HCT116 (cell line): ENCODE measurements at regions of chr9 and their contacts with region 1.

Region 1: DNA sequence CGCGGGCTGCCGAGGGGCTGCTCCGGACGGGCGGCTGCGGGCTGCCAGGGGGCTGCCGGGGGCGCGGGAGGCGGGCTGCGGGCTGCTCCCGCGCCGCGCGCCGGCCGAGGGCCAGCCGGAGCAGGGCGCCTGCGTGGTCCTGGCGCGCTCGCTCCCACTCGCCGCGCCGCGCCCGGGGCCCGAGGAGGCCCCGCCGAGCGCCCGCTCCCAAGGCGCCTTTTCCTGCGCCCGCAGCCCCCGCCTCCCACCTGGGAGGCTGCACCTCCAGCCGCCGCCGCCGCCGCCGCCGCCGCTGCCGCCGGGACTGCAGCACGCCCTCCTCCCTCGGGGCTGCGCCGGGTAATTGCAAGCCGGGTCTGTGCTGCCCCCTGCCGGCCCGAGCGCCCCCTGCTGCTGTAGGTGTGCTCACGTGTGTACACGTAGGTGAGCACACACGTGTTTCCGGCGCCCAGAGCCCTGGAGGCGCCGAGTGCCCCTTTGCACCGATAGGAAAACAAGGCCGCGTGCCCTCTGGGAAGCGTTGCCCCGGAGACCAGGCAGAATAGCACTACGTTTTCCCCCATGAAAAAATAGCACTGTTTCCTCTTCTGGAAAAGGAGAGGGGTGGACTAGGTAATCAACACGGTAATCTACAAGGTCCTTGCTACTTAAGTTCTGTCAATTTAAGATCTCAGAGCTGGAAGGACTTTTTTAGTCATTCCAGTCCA is at the start of gene EPB41L4B:
- DNase-seq: peak; percentile 73
- ATAC-seq: peak; percentile 79
- H3K4me3 ChIP-seq: peak within 1 kb of the TSS; percentile 62 to 71
- H3K27ac ChIP-seq: peak within 1 kb of the TSS; percentile 43; the same call in 1 of the 2 replicates
- H3K4me1 ChIP-seq: peaks cover 20 to 45% of the 10 kb centered on the region in 2 experiments
- H3K27me3 ChIP-seq: no peaks in the 10 kb centered on the region
- CTCF ChIP-seq: peak in 2 of 3 experiments; percentile 87 to 91; a peak in 4 of 6 replicates
- POLR2A ChIP-seq: no peak
- RAD21 ChIP-seq: no peak
- total RNA-seq, gene EPB41L4B: 8.1 TPM

Region 2: GRCh38 chr9:109101810-109102209 is 219.1 kb before region 1 on chr9:
- CTCF ChIA-PET with region 1: no interaction called
- POLR2A ChIA-PET with region 1: no interaction called
- RAD21 ChIA-PET with region 1: no interaction called
- intact Hi-C with region 1: loop called (anchors 5 kb)
- DNase-seq: peak; percentile 27
- ATAC-seq: no peak
- H3K4me3 ChIP-seq: no peak overlapping the region
- H3K27ac ChIP-seq: no peak overlapping the region
- H3K4me1 ChIP-seq: peaks cover 46 to 49% of the 10 kb centered on the region in 2 experiments
- H3K27me3 ChIP-seq: no peaks in the 10 kb centered on the region
- CTCF ChIP-seq: no peak
- POLR2A ChIP-seq: no peak
- RAD21 ChIP-seq: no peak

Region 3: DNA sequence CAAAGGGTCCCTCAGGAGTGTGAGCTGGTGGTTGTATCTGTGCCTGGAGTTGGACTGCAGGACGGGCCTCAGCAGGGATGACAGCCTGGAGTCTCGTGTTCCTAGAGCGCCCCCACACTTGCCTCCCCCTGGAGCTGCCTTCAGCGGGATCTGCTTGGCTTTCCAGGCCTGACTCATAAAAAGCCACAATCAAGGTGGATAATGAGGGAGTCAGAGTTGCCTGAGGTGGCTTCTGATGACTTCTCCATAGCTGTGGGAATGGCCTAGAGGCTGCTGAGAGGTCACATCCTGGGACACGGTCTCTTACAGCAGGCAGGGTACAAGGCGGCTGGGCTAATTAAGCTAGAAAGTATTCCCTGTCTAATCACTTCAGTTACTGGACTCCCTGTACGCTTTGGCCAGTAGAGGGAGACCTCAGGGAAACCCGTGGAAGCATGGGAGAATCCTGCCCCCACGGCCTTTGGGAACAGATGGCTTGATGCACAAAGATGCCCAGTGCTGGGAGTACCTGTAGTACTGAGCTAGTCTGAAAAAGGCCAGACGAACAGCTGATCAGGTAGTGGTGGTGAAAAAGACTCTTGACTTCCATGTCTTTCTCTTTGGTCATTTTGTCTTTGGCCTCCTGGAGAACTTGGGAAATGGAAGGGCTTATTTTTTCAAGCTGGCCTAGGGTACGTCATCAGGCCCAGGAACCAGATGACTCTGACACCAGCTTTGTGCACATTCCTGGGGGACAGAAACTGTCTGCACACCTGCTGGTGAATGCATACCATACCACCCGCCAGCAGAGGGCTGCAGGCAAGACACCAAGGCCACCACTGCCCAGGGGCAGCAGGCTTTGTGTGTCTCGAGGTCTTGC is 137.7 kb before region 1 on chr9:
- CTCF ChIA-PET with region 1: interaction called, 10 read pairs
- POLR2A ChIA-PET with region 1: no interaction called
- RAD21 ChIA-PET with region 1: interaction called in 1 of 2 experiments, 5 read pairs
- intact Hi-C with region 1: loop called (anchors 2 kb)
- DNase-seq: peak; percentile 47
- ATAC-seq: peak; percentile 93
- H3K4me3 ChIP-seq: no peak overlapping the region
- H3K27ac ChIP-seq: no peak overlapping the region
- H3K4me1 ChIP-seq: peaks cover 0 to 10% of the 10 kb centered on the region in 2 experiments; a peak in 1 of 4 replicates
- H3K27me3 ChIP-seq: no peaks in the 10 kb centered on the region
- CTCF ChIP-seq: peak; percentile 55 to 71 (median 66)
- POLR2A ChIP-seq: no peak
- RAD21 ChIP-seq: peak; percentile 43

Region 4: DNA sequence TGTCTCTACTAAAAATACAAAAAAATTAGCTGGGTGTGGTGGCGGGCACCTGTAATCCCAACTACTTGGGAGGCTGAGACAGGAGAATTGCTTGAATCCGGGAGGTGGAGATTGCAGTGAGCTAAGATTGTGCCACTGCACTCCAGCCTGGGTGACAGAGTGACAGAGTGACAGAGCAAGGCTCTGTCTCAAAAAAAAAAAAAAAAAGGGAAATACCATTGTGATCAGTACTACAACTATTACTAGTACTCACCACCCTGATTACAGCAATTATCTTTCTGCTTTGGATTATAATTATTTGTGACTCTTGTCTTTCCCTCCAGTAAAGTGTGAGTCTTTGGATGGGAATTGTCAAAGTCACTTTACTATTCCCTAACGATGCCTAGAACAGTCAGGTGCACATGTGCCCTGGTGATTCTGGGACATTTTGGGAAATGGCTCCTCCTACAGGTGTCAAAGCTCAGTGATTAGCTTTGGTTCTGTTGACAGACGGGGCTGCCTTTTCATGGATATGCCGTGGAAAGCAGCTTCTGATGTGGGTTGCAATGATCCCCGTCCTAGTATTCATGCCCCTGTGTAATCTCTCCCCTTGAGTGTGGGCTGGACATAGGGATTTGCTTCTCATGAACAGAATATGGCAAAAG is 122.0 kb before region 1 on chr9:
- CTCF ChIA-PET with region 1: interaction called, 9 read pairs
- POLR2A ChIA-PET with region 1: no interaction called
- RAD21 ChIA-PET with region 1: no interaction called
- intact Hi-C with region 1: loop called (anchors 2 kb)
- DNase-seq: peak; percentile 26
- ATAC-seq: peak; percentile 97
- H3K4me3 ChIP-seq: no peak overlapping the region
- H3K27ac ChIP-seq: no peak overlapping the region
- H3K4me1 ChIP-seq: peaks cover 0 to 3% of the 10 kb centered on the region in 2 experiments; a peak in 1 of 4 replicates
- H3K27me3 ChIP-seq: no peaks in the 10 kb centered on the region
- CTCF ChIP-seq: peak; percentile 34 to 51 (median 46); a peak in 4 of 6 replicates
- POLR2A ChIP-seq: no peak
- RAD21 ChIP-seq: peak; percentile 59; the same call in 1 of the 2 replicates

Region 5: DNA sequence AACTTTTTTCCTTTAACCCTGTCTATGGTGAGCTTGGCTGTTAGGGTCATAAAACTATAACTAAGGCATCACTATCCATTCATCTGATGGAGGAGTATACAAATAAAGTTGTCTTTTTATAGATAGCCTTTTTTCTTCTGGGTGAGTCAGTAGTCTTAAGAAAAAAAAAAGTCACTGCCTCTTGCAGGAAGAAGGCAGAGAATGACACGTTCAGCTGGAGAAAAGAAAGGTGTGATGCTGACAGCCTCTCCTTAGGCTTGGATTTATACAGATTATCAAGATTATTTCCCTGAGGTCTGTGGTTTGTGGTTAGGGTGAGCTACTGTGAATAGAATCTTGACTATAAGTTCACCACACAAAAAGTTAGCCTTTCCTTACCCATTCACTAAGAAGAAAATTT is 23.0 kb before region 1 on chr9:
- CTCF ChIA-PET with region 1: no interaction called
- POLR2A ChIA-PET with region 1: no interaction called
- RAD21 ChIA-PET with region 1: no interaction called
- intact Hi-C with region 1: no loop called
- DNase-seq: no peak
- ATAC-seq: no peak
- H3K4me3 ChIP-seq: no peak overlapping the region
- H3K27ac ChIP-seq: no peak overlapping the region
- H3K4me1 ChIP-seq: no peaks in the 10 kb centered on the region
- H3K27me3 ChIP-seq: no peaks in the 10 kb centered on the region
- CTCF ChIP-seq: no peak
- POLR2A ChIP-seq: no peak
- RAD21 ChIP-seq: no peak